ENCODE measurements at regions of chr3 and their contacts with region 1.

Region 1: GRCh38 chr3:179147873-179148615 is at the start of gene PIK3CA:
- DNase-seq: peak; percentile 91 to 95 (median 94)
- ATAC-seq: peak; percentile 93
- H3K4me3 ChIP-seq: peak within 1 kb of the TSS; percentile 85
- H3K4me1 ChIP-seq: peaks cover 11% of the 10 kb centered on the region
- CTCF ChIP-seq: no peak
- total RNA-seq, gene PIK3CA: 16.5 to 30.6 (median 19.5) TPM

Region 2: DNA sequence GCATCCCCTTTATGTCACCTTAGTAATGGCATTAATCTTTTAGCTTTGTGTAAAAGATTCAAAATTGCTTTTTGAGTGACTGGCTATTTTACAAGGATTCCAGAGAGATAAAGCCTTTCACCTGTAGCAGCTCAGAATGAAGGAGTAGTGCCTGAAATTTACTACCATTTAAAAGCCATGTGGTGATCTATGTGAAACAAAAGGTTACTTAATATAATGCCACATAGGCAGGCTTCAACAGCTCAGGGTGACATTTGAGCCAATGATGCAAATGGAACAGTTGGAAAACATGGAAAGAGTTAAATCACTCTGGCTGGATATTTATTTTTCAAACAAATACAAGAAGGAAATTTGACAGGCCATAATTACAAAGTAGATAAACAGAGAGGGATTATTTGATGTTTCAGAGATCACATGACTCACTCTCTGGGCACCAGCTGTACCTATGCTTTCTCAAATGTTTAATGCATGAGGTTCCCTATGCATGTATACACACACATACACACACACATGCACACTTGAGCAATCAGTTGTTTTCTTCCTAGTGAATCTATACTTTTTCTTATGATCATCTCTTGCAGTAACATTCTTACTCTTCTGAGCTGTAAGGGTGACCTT is 247.9 kb before region 1 on chr3:
- intact Hi-C with region 1: no loop called
- DNase-seq: no peak
- ATAC-seq: peak; percentile 35
- H3K4me3 ChIP-seq: no peak overlapping the region
- H3K4me1 ChIP-seq: no peaks in the 10 kb centered on the region
- CTCF ChIP-seq: no peak

Region 3: GRCh38 chr3:179309225-179310078 is 161.4 kb after region 1 on chr3:
- intact Hi-C with region 1: loop called in 1 of 2 experiments (anchors 10 kb)
- DNase-seq: no peak
- ATAC-seq: no peak
- H3K4me3 ChIP-seq: no peak overlapping the region
- H3K4me1 ChIP-seq: no peaks in the 10 kb centered on the region
- CTCF ChIP-seq: no peak